Breast epithelium (tissue), 4 donors: ENCODE measurements at regions of chr2 and their contacts with region 1.

Region 1: GRCh38 chr2:52895726-52896340 is 871.8 kb upstream of the CHAC2 start:
- DNase-seq: no peak
- H3K4me3 ChIP-seq: no peak overlapping the region
- H3K27ac ChIP-seq: no peak overlapping the region
- H3K4me1 ChIP-seq: no peaks in the 10 kb centered on the region
- H3K27me3 ChIP-seq: no peaks in the 10 kb centered on the region
- CTCF ChIP-seq: no peak
- POLR2A ChIP-seq: no peak

Region 2: DNA sequence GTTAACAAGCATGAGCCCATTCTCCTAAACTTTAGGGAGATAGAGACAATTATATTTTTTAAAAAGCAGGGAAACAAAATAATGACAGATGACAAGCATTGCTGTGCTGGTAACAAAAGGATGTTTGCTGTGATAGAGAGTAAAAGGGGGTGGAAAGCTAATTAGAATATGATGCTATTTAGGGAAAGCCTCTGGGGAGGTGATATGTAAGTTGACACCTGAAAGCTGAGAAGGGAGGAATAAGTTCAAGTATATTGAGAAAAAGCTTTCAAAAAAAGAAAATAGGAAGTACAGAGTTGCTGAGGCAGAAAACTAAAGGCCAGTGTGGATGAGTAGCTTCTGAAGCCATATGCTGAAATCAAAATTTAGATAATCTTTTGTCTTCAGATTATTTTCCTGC is 1298.7 kb before region 1 on chr2:
- intact Hi-C with region 1: loop called (anchors 10 kb)
- DNase-seq: no peak
- H3K4me3 ChIP-seq: no peak overlapping the region
- H3K27ac ChIP-seq: no peak overlapping the region
- H3K4me1 ChIP-seq: no peaks in the 10 kb centered on the region
- H3K27me3 ChIP-seq: no peaks in the 10 kb centered on the region
- CTCF ChIP-seq: no peak
- POLR2A ChIP-seq: no peak